Activated CD4-positive, alpha-beta memory T cell treated with anti-CD3 and anti-CD28 coated beads for 36 hours (primary cell): ENCODE measurements at regions of chr1 and their contacts with region 1.

Region 1: DNA sequence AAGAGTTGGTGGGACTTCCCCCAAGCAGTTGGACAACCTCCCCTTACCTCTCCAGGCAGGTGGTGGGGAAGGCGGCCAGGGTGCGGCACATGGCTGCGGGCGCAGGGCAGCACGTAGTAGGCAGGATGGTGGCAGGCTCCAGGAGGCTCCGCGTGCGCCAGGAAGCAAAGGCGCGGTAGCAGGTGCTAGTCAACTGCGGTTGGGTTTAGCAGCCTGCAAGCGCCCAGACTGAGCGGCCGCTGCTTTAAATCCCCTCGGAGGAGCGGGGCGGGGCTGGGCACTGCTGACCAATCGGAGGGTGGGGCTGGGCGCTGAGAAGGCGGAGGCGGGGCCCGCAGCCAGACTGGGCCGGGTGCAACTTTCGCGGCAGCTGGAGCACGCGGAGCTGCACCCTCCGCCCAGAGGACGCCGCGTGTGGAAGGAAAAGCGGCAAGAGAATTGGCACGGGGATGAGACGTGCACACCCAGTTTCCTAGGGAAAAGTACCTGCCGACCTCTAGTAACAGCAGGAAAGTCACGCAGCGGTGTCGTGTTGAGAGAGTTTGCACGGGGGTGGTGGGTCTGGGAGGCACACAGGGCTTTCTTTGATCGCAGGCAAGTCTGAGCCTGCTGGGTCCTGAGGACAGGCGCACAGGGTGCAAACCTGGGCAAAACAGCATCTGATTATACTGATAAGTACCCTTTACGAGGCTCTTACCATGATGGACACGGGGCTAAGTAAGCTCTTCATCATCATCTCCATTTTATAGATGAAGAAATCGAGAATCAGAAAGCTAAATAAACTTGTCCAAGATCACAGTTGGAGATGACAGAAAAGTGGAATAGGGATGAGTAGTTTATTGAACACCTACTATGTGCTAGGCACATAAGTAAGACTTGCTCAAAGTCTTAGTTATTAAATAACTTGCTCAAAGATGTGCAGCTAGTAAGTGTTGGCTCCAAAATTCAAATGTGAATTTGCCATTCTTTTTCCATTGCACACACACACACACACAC is at the start of gene RGS16:
- DNase-seq: peak; percentile 96
- H3K4me3 Mint-ChIP-seq: no peak within 1 kb of the TSS
- H3K27ac Mint-ChIP-seq: no peak within 1 kb of the TSS
- H3K4me1 Mint-ChIP-seq: peaks cover 35% of the 10 kb centered on the region
- H3K27me3 Mint-ChIP-seq: no peaks in the 10 kb centered on the region
- total RNA-seq, gene RGS16: 49.8 to 51.9 TPM

Region 2: DNA sequence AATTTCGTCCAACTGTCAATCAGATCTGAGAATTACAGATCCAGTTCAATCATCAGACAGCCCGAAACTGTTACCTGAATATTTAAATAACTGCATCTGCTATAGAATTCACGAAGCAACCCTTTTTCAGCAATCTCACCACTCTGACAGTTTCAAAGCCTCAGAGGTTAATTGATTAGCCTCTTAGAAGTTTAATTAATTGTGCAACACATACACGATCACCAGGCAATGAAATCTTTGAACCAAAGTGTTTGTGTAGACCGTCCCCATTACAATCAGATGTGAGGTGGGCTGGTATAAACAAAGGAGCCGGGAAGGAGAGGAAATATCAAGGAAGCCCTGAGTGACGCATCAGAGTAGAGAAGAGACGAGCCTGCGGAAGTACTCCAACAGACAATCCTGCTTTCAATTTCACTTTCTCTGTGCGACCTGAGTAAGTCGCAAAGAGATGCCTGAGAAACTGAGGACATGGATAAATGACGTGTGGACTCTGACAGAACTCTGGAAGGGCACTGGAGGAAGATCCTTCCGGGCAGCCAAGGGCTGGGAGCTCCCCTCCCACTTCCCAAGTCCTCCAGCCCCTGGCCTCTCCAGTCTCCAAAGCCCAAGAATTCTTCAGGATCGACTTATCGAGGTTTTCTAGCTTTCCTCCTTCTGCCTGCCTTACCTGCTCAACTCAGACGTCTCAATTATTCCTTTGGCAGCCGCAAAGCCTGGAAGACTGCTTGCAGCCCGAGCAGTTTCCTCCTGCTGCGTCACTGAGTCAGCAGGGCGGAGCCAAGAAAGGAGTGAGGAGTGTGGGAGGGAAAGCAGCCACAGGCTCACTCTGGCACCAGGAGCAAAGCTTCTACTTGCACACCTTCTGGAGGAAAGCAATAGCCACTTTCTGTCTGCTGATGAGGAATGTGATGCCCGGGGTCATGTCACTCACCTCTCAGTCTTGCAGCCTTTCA is 15.7 kb before region 1 on chr1 and contains the start of gene RNASEL:
- CTCF ChIA-PET with region 1: interaction called, 46 read pairs
- POLR2A ChIA-PET with region 1: interaction called, 11 read pairs
- intact Hi-C with region 1: no loop called
- DNase-seq: peak; percentile 74
- H3K4me3 Mint-ChIP-seq: peak within 1 kb of the TSS; percentile 94
- H3K27ac Mint-ChIP-seq: peak within 1 kb of the TSS; percentile 99
- H3K4me1 Mint-ChIP-seq: peaks cover 46% of the 10 kb centered on the region
- H3K27me3 Mint-ChIP-seq: no peaks in the 10 kb centered on the region
- total RNA-seq, gene RNASEL: 4.5 TPM

Region 3: DNA sequence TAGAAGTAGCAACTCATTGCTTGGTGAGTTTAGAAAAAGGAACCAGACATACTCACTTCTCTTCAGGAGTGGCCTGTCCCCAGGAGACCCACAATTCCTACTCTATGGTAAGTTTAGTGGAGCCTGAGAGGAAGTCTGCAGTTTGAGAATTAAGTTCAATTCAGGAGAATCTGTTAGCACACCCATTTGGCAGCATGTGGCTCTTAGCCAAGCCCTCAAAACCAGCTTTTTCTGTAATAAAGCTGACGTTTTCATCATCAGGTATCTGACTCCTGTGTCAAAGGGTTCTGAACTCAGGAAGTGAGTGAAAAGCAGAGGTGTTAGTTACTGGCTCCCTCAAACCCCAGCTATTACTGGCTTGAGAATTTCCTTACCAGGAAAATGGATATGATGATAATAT is 20.1 kb after region 1 on chr1:
- CTCF ChIA-PET with region 1: interaction called, 6 read pairs
- POLR2A ChIA-PET with region 1: interaction called, 7 read pairs
- intact Hi-C with region 1: loop called (anchors 1 kb)
- DNase-seq: peak; percentile 53
- H3K4me3 Mint-ChIP-seq: peak overlapping the region; percentile 1
- H3K27ac Mint-ChIP-seq: peak overlapping the region; percentile 80
- H3K4me1 Mint-ChIP-seq: peaks cover 74% of the 10 kb centered on the region
- H3K27me3 Mint-ChIP-seq: no peaks in the 10 kb centered on the region

Region 4: GRCh38 chr1:182709225-182709771 is 104.8 kb after region 1 on chr1:
- CTCF ChIA-PET with region 1: interaction called, 3 read pairs
- POLR2A ChIA-PET with region 1: interaction called, 5 read pairs
- intact Hi-C with region 1: loop called (anchors 1 kb)
- DNase-seq: peak; percentile 17
- H3K4me3 Mint-ChIP-seq: no peak overlapping the region
- H3K27ac Mint-ChIP-seq: peak overlapping the region; percentile 3
- H3K4me1 Mint-ChIP-seq: peaks cover 30% of the 10 kb centered on the region
- H3K27me3 Mint-ChIP-seq: no peaks in the 10 kb centered on the region

Region 5: DNA sequence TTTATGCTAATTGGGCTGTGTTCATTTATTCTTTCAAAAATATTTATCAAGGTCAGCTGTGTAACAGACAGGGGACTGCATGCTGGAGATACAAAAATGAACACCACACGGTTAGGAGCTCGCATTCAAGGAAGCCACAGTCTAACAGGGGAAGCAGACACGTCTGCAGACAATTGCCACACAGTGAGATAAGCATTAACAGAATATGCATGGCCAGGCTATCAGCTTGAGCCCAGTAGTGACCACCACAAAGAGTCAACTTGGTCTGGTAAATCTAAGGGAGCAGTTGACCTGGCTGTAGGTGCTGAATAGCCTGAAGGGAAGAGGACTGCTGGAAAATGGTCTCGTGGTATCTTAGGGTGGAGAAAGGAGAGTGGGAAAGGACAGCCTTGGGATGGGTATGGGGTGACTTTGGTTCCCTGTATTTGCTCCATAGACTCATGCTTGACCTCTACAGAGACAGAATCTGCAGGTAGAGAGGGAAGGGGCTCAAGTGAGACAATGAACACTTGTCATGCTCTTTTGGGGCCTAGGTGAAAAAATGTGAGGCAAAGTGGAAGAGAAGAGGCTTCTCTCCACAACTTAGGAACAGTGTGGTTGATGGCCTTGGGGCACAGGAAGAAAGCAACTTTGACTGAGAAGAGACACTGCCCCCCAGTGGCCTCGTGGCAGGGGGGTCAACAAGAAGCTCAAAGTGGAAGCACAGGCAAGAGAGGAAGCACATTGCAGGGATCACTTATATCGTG is 177.5 kb after region 1 on chr1:
- CTCF ChIA-PET with region 1: interaction called, 1,086 read pairs
- POLR2A ChIA-PET with region 1: interaction called, 13 read pairs
- intact Hi-C with region 1: loop called (anchors 1 kb)
- DNase-seq: peak; percentile 85
- H3K4me3 Mint-ChIP-seq: no peak overlapping the region
- H3K27ac Mint-ChIP-seq: no peak overlapping the region
- H3K4me1 Mint-ChIP-seq: peaks cover 8% of the 10 kb centered on the region
- H3K27me3 Mint-ChIP-seq: no peaks in the 10 kb centered on the region

Region 6: DNA sequence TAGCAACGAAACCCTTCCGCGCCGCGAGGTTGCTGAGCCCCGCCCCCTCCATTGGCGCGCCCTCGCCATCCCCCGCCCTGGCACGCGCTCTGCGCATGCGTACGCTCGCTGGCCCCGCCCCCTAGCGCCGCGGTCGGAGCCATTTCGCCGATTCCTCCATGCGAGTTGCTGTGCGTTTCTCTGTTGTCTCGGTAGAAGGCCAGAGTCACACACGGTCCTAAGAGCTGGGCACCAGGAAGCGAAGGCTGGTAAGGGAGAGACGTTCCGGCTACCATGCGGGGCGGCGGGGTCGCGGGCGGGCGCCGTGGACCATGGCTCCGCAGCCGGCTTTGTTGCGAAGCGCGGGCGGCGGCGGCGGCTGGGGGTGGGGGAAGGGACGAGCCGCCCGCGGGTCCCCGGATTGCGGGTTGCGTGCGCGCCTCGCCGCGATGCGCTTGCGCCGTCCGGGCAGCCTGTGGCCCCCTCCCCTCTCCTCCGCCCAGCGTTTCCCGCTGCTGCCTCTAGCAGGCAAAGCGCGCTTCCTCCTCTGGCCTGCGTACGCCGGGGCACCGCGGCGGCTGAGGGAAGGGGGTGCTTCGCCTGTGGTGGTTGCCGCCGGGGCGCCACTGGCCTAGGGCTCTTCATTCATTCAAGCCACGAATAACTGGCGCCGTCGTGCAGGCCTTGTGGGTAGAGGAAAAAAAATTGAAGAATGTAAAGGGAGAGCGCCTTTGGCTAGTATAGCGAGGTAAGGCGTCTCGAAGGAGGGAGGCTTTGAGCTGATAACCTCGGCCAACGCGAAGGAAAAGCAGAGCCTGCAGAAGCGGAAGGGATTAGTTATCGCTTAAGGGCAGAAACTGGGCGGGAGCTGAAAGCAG is 235.0 kb after region 1 on chr1 and contains the start of gene DHX9:
- CTCF ChIA-PET with region 1: no interaction called
- POLR2A ChIA-PET with region 1: interaction called, 11 read pairs
- intact Hi-C with region 1: loop called (anchors 5 kb)
- DNase-seq: peak; percentile 96
- H3K4me3 Mint-ChIP-seq: peak within 1 kb of the TSS; percentile 98
- H3K27ac Mint-ChIP-seq: peak within 1 kb of the TSS; percentile 97
- H3K4me1 Mint-ChIP-seq: peaks cover 38% of the 10 kb centered on the region
- H3K27me3 Mint-ChIP-seq: no peaks in the 10 kb centered on the region
- total RNA-seq, gene DHX9: 212 to 215 TPM

Region 7: GRCh38 chr1:183251959-183252450 is 647.5 kb after region 1 on chr1:
- CTCF ChIA-PET with region 1: no interaction called
- POLR2A ChIA-PET with region 1: no interaction called
- intact Hi-C with region 1: no loop called
- DNase-seq: no peak
- H3K4me3 Mint-ChIP-seq: no peak overlapping the region
- H3K27ac Mint-ChIP-seq: no peak overlapping the region
- H3K4me1 Mint-ChIP-seq: no peaks in the 10 kb centered on the region
- H3K27me3 Mint-ChIP-seq: peaks cover 9% of the 10 kb centered on the region